GM10248 (cell line): ENCODE measurements at regions of chr19 and their contacts with region 1.

Region 1: DNA sequence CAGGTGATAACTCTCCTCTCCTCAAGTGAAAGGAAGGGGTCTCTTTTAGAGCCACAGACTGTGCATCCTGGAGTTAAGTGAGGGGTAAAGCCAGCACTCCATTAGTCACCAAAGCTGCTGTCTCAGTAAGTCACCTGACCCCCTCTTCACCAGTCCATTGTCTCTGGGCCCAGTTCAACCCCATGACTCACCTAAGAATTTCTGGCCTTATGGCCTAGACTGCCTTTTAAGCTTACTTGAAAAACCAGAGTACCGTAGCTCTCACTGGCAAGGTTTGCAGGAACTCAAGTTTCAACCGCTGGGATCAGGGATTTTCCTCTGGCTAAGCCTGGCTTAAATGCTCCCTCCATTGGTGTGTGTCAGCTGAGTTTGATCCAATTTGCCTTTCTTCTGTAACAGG is 23.4 kb upstream of the EID2 start:
- DNase-seq: no peak
- CTCF ChIP-seq: no peak

Region 2: GRCh38 chr19:39277612-39278011 is 285.8 kb before region 1 on chr19:
- CTCF ChIA-PET with region 1: no interaction called
- POLR2A ChIA-PET with region 1: no interaction called
- DNase-seq: no peak
- CTCF ChIP-seq: no peak

Region 3: GRCh38 chr19:39546599-39546998 is 16.8 kb before region 1 on chr19:
- CTCF ChIA-PET with region 1: interaction called, 16 read pairs
- POLR2A ChIA-PET with region 1: no interaction called
- DNase-seq: no peak
- CTCF ChIP-seq: no peak

Region 4: GRCh38 chr19:39746836-39747529 is 183.6 kb after region 1 on chr19:
- CTCF ChIA-PET with region 1: no interaction called
- POLR2A ChIA-PET with region 1: no interaction called
- DNase-seq: no peak
- CTCF ChIP-seq: no peak